Activated B cell treated with CpG ODN at 0.5 μM for 24 hours (primary cell): ENCODE measurements at regions of chr4 and their contacts with region 1.

Region 1: DNA sequence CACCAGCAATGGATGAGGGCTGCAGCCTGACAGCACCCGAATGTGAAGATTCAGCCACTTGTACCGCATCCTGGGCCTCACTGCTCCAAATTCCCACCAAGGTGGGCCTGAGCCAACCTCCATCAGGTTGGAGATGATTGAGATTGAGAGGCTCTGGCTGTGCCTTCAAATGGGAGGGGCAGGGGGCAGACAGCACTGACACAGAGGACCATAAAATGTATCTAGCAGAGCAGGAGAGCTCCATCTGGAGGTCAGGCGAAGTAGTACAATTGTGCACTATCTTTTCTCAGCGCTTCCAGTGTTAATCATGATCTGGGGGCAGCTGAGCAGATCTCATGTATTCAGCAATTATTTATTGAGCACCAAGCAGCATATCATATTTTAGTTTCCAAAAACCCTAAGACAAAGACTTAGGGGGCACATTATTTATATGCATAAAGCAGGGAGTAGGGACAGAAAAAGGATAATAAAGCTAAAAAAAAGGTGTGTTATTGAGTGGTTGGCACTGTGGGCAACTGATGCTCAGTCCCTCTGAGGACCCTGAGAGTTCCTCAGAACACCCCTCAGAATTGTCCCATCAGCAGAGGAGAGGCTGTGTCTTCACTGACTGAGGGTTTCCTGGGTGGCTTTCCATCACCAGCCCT is 31.6 kb upstream of the C1QTNF7 start:
- DNase-seq: no peak
- ATAC-seq: peak; percentile 88
- H3K4me3 Mint-ChIP-seq: no peak overlapping the region
- H3K27ac Mint-ChIP-seq: no peak overlapping the region
- H3K4me1 Mint-ChIP-seq: peaks cover 32% of the 10 kb centered on the region
- H3K27me3 Mint-ChIP-seq: peaks cover 2% of the 10 kb centered on the region
- CTCF ChIP-seq: peak; percentile 33

Region 2: GRCh38 chr4:14607578-14607977 is 788.7 kb before region 1 on chr4:
- CTCF ChIA-PET with region 1: no interaction called
- POLR2A ChIA-PET with region 1: no interaction called
- intact Hi-C with region 1: no loop called
- DNase-seq: no peak
- ATAC-seq: no peak
- H3K4me3 Mint-ChIP-seq: no peak overlapping the region
- H3K27ac Mint-ChIP-seq: no peak overlapping the region
- H3K4me1 Mint-ChIP-seq: no peaks in the 10 kb centered on the region
- H3K27me3 Mint-ChIP-seq: no peaks in the 10 kb centered on the region
- CTCF ChIP-seq: no peak

Region 3: GRCh38 chr4:15231265-15232091 is 164.8 kb before region 1 on chr4:
- CTCF ChIA-PET with region 1: interaction called, 15 read pairs
- POLR2A ChIA-PET with region 1: no interaction called
- intact Hi-C with region 1: loop called (anchors 1 kb)
- DNase-seq: peak; percentile 24
- ATAC-seq: peak; percentile 79
- H3K4me3 Mint-ChIP-seq: no peak overlapping the region
- H3K27ac Mint-ChIP-seq: no peak overlapping the region
- H3K4me1 Mint-ChIP-seq: peaks cover 21% of the 10 kb centered on the region
- H3K27me3 Mint-ChIP-seq: peaks cover 2% of the 10 kb centered on the region
- CTCF ChIP-seq: peak; percentile 70

Region 4: GRCh38 chr4:15238720-15239119 is 157.6 kb before region 1 on chr4:
- CTCF ChIA-PET with region 1: interaction called, 15 read pairs
- POLR2A ChIA-PET with region 1: no interaction called
- intact Hi-C with region 1: loop called (anchors 1 kb)
- DNase-seq: no peak
- ATAC-seq: peak; percentile 58
- H3K4me3 Mint-ChIP-seq: no peak overlapping the region
- H3K27ac Mint-ChIP-seq: no peak overlapping the region
- H3K4me1 Mint-ChIP-seq: peaks cover 8% of the 10 kb centered on the region
- H3K27me3 Mint-ChIP-seq: peaks cover 2% of the 10 kb centered on the region
- CTCF ChIP-seq: no peak

Region 5: DNA sequence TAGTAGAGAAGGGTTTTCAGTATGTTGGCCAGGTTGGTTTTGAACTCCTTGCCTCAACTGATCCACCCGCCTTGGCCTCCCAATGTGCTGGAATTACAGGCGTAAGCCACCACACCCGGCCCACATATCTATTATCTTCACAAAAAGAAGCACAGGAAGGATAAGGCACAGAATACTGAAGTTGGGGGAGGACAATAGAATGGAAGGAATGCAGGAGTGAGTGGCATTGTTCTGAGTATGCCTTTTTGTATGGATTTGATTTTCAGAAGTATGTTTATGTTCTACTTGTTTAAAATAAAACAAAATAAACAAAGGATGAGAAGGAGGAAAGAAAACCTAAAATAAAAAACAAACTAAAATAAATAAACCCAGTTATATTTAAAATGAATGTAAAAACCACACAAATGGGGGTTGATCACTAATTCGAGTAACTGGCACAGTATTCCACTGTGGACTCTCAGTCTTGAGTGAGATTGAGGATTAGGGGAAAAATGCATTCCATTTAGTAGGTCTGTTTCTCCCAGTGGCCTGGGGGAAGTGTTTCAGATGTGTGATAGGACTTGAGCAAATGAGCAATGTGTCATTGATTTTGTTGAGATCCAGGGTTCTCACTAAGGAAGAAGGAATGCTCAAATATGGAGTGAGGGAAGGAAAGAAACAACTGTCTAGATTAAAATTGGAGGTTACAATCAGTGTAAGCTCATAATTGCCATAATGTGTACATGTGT is 77.5 kb before region 1 on chr4:
- CTCF ChIA-PET with region 1: no interaction called
- POLR2A ChIA-PET with region 1: no interaction called
- intact Hi-C with region 1: no loop called
- DNase-seq: no peak
- ATAC-seq: no peak
- H3K4me3 Mint-ChIP-seq: no peak overlapping the region
- H3K27ac Mint-ChIP-seq: no peak overlapping the region
- H3K4me1 Mint-ChIP-seq: no peaks in the 10 kb centered on the region
- H3K27me3 Mint-ChIP-seq: peaks cover 3% of the 10 kb centered on the region
- CTCF ChIP-seq: no peak

Region 6: GRCh38 chr4:15410750-15411149 is 14.5 kb after region 1 on chr4:
- CTCF ChIA-PET with region 1: interaction called, 8 read pairs
- POLR2A ChIA-PET with region 1: interaction called, 3 read pairs
- intact Hi-C with region 1: loop called (anchors 1 kb)
- DNase-seq: no peak
- ATAC-seq: peak; percentile 68
- H3K4me3 Mint-ChIP-seq: peak overlapping the region; percentile 73
- H3K27ac Mint-ChIP-seq: peak overlapping the region; percentile 79
- H3K4me1 Mint-ChIP-seq: peaks cover 67% of the 10 kb centered on the region
- H3K27me3 Mint-ChIP-seq: no peaks in the 10 kb centered on the region
- CTCF ChIP-seq: no peak

Region 7: GRCh38 chr4:15416357-15417232 is 20.3 kb after region 1 on chr4:
- CTCF ChIA-PET with region 1: interaction called, 3 read pairs
- POLR2A ChIA-PET with region 1: interaction called, 3 read pairs
- intact Hi-C with region 1: loop called (anchors 1 kb)
- DNase-seq: no peak
- ATAC-seq: peak; percentile 48
- H3K4me3 Mint-ChIP-seq: peak overlapping the region; percentile 55
- H3K27ac Mint-ChIP-seq: peak overlapping the region; percentile 82
- H3K4me1 Mint-ChIP-seq: peaks cover 63% of the 10 kb centered on the region
- H3K27me3 Mint-ChIP-seq: no peaks in the 10 kb centered on the region
- CTCF ChIP-seq: no peak